Activated naive CD4-positive, alpha-beta T cell treated with anti-CD3 and anti-CD28 coated beads for 36 hours (primary cell): ENCODE measurements at regions of chr16 and their contacts with region 1.

Region 1: GRCh38 chr16:68719993-68720489 is 17.1 kb upstream of the CDH1 start:
- DNase-seq: peak; percentile 80
- H3K4me3 Mint-ChIP-seq: no peak overlapping the region
- H3K27ac Mint-ChIP-seq: peak overlapping the region; percentile 83
- H3K4me1 Mint-ChIP-seq: peaks cover 19% of the 10 kb centered on the region
- H3K27me3 Mint-ChIP-seq: no peaks in the 10 kb centered on the region

Region 2: DNA sequence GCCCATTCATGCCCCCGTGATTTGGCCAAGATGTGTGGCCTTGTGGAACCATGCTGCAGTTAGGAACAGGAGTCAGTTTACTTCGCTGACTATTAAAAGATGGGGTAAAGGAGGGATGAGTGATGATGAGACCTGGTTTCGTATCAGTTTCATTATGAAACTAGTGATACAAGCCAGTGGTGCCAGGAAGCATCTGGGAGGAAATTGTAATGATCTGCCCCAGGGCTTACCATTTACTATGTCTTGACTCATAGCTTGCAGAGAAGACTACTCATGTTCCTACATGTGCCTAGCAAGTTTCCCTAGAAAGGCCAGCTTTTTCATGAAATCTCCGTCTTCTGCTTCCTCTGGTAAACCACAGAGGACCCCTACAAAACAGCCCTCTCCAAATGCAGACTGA is 51.8 kb before region 1 on chr16:
- CTCF ChIA-PET with region 1: no interaction called
- intact Hi-C with region 1: loop called (anchors 1 kb)
- DNase-seq: peak; percentile 77
- H3K4me3 Mint-ChIP-seq: no peak overlapping the region
- H3K27ac Mint-ChIP-seq: peak overlapping the region; percentile 77
- H3K4me1 Mint-ChIP-seq: peaks cover 24% of the 10 kb centered on the region
- H3K27me3 Mint-ChIP-seq: peaks cover 7% of the 10 kb centered on the region

Region 3: DNA sequence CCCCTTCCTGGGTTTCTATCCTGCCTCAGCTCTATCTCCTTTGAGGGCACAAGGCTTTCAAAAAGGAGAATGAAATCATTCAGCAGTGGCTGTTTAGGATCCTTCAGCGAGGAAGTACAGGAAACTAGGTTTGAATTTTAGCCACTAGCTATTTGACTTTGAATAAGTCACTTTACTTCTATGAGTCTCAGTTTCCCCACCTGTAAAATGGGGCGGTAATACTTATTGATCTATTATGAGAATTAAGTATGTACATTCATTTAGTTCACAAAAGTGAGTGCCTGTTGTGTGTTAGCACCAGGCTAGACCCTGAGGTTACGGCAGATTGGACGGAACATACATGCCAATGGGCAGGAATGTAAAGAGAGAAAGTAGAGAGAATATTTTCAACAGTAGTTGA is 23.6 kb after region 1 on chr16:
- CTCF ChIA-PET with region 1: no interaction called
- intact Hi-C with region 1: loop called (anchors 2 kb)
- DNase-seq: no peak
- H3K4me3 Mint-ChIP-seq: no peak overlapping the region
- H3K27ac Mint-ChIP-seq: no peak overlapping the region
- H3K4me1 Mint-ChIP-seq: peaks cover 6% of the 10 kb centered on the region
- H3K27me3 Mint-ChIP-seq: peaks cover 15% of the 10 kb centered on the region

Region 4: DNA sequence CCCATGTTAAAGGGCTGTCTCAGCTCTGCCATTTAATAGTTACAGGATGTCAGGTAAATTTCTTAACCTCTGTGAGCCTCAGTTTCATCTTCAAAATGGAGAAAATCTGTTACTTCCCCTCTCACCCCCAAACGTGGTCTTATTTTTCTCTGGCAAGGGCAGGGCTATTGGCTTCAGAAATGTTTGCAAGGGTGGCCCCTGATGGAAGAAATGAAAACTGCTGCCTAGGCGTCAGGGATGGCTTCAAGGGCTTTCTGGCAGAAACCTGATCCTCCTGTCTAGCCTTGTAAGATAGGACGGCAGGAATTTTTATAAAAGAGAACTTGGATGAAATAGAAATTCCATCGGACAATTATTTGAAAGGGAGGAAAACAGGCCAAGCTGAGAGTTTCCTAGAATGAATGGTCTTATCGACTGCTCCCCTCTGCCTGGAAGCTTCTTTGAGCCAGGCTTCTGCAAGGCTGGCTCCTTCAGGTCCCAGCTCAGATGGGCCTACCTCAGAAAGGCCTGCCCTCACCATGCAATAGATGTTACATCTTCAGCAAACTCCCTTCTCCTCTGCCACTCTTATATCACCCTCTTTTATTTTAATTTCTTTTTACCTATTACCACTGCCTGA is 80.3 kb after region 1 on chr16:
- CTCF ChIA-PET with region 1: interaction called, 4 read pairs
- intact Hi-C with region 1: loop called (anchors 1 kb)
- DNase-seq: peak; percentile 86
- H3K4me3 Mint-ChIP-seq: no peak overlapping the region
- H3K27ac Mint-ChIP-seq: peak overlapping the region; percentile 30
- H3K4me1 Mint-ChIP-seq: peaks cover 3% of the 10 kb centered on the region
- H3K27me3 Mint-ChIP-seq: no peaks in the 10 kb centered on the region